OCI-LY7 (cell line): ENCODE measurements at regions of chr12 and their contacts with region 1.

Region 1: DNA sequence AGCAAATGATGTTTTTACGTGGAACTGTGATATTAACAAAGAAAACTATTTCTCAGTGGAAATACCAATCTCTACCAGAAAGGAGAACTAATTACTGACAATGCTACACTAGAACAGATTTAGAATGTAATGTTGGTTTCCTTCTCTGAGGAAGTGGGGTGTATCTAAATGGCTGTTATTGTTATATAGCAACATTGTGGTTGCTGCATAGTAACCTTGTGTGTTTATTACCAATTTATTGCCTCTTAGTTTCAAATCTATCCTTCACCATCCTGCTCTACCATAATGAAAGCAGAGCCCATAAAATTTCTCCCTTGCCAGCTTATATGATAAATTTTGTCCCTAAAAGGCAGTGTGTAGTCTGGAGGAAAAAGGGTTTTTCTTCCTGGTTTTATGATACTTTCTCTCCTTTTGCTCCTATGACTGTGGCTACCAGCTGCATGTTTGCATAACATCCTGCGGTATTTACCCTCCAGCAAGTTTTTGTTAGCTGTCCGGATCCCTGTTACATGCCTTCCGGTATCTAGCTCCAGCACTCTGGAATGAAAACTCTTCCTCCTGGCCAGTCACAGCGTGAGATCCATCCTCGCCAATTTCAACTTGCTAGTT is 5.7 kb upstream of the KLRK1 start:
- DNase-seq: peak; percentile 83
- H3K4me3 ChIP-seq: peak overlapping the region; percentile 79
- H3K27ac ChIP-seq: peak overlapping the region; percentile 97
- H3K4me1 ChIP-seq: peaks cover 74% of the 10 kb centered on the region
- CTCF ChIP-seq: no peak

Region 2: DNA sequence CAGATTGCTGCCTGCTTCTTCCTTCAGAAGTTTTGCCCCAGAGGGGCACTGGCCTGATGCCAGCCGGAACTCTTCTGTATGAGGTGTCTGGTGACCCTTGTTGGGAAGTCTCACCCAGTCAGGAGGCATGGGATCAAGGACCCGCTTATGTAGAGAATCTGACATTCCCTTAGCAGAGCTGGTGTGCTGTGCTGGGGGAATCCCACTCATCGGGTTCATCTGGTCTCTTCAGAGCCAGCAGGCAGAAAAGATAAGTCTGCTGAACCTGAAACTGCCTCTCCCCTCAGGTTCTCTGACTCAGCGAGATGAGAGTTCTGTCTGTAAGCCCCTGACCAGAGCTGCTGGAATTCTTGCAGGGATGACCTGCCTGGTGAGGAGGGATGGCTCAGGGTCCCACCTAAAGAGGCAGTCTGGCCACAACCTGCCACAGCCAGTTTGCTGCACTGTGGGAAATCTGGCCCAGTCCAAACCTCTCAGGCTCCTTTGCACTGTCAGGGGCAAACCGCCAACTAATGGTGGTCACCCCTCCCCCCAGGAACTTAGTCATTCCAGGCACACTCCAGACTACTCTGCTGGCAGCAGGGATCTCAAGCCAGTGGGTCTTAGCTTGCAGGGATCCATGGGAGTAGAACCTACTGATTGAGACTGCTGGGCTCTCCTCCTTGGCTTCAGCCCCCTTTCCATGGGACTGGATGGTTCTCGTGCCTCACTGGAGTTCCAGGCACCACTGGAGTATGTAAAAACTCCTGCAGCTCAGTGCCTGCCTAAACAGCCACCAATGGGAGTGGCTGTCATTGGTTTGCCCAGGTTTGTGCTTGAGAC is 721.9 kb before region 1 on chr12:
- CTCF ChIA-PET with region 1: no interaction called
- POLR2A ChIA-PET with region 1: interaction called, 5 read pairs
- intact Hi-C with region 1: loop called (anchors 5 kb)
- DNase-seq: peak; percentile 43
- H3K4me3 ChIP-seq: peak overlapping the region; percentile 68
- H3K27ac ChIP-seq: peak overlapping the region; percentile 87
- H3K4me1 ChIP-seq: peaks cover 93% of the 10 kb centered on the region
- CTCF ChIP-seq: no peak

Region 3: GRCh38 chr12:10364815-10365622 is 30.5 kb before region 1 on chr12:
- CTCF ChIA-PET with region 1: interaction called, 5 read pairs
- POLR2A ChIA-PET with region 1: interaction called, 36 read pairs
- intact Hi-C with region 1: no loop called
- DNase-seq: peak; percentile 91
- H3K4me3 ChIP-seq: peak overlapping the region; percentile 71
- H3K27ac ChIP-seq: peak overlapping the region; percentile 84
- H3K4me1 ChIP-seq: peaks cover 44% of the 10 kb centered on the region
- CTCF ChIP-seq: no peak

Region 4: GRCh38 chr12:10409387-10409786 is 13.9 kb after region 1 on chr12 and contains the start of gene KLRC4:
- CTCF ChIA-PET with region 1: interaction called, 4 read pairs
- POLR2A ChIA-PET with region 1: interaction called, 26 read pairs
- intact Hi-C with region 1: loop called (anchors 2 kb)
- DNase-seq: peak; percentile 92
- H3K4me3 ChIP-seq: peak within 1 kb of the TSS; percentile 73
- H3K27ac ChIP-seq: peak within 1 kb of the TSS; percentile 86
- H3K4me1 ChIP-seq: peaks cover 47% of the 10 kb centered on the region
- CTCF ChIP-seq: no peak
- total RNA-seq, gene KLRC4: 8.6 and 9.3 TPM in 2 replicates

Region 5: GRCh38 chr12:12356886-12357718 is 1961.6 kb after region 1 on chr12 and contains the start of gene BORCS5:
- CTCF ChIA-PET with region 1: no interaction called
- POLR2A ChIA-PET with region 1: no interaction called
- intact Hi-C with region 1: loop called (anchors 10 kb)
- DNase-seq: peak; percentile 99
- H3K4me3 ChIP-seq: peak within 1 kb of the TSS; percentile 81
- H3K27ac ChIP-seq: peak within 1 kb of the TSS; percentile 82
- H3K4me1 ChIP-seq: peaks cover 18% of the 10 kb centered on the region
- CTCF ChIP-seq: peak; percentile 55
- total RNA-seq, gene BORCS5: 9.6 and 10.4 TPM in 2 replicates